ENCODE measurements at regions of chr3 and their contacts with region 1.

Region 1: DNA sequence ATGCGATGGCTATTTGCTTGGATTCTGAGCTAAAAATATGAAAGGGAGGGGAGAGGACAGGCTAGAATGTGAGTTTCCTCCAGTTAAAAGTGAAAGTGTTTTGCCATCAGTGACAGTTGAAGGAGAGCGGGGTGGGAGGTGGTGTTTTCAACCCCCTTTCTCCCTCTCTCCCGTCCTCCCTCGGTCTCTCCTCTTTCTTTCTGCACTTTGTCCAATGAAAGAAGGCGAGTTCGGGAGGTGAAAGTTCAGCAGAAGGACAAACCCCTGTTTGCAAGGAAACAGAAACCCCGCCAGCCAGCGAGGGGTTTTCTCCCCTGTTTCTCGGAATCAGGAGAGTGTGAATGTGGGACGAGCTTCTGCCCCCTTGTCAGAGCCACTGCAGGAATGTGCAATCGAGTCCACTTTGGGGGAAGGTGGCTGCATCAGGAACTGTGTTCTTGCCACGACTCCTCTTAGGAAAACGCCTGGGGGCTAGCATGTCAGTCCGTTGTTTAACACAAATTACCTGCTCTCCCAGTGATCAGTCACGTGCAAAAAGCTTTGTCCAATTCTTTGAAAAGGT is 1.0 kb upstream of the FOXP1 start:
- DNase-seq: peak in 33 of 35 experiments; percentile 4 to 66 (median 26)
- ATAC-seq: peak in 2 of 4 experiments; percentile 20 to 25
- H3K4me3 ChIP-seq: peak overlapping the region; percentile 77 to 81
- H3K4me3 Mint-ChIP-seq: peak overlapping the region; percentile 93 to 96 (median 93)
- H3K27ac ChIP-seq: peak overlapping the region; percentile 70
- H3K27ac Mint-ChIP-seq: peak overlapping the region; percentile 94 to 95
- H3K4me1 ChIP-seq: peaks cover 5 to 26% of the 10 kb centered on the region in 2 experiments
- H3K4me1 Mint-ChIP-seq: peaks cover 37 to 43% (median 39%) of the 10 kb centered on the region in 3 donors
- H3K27me3 ChIP-seq: peaks cover 0 to 6% of the 10 kb centered on the region in 2 experiments
- H3K27me3 Mint-ChIP-seq: no peaks in the 10 kb centered on the region

Region 2: DNA sequence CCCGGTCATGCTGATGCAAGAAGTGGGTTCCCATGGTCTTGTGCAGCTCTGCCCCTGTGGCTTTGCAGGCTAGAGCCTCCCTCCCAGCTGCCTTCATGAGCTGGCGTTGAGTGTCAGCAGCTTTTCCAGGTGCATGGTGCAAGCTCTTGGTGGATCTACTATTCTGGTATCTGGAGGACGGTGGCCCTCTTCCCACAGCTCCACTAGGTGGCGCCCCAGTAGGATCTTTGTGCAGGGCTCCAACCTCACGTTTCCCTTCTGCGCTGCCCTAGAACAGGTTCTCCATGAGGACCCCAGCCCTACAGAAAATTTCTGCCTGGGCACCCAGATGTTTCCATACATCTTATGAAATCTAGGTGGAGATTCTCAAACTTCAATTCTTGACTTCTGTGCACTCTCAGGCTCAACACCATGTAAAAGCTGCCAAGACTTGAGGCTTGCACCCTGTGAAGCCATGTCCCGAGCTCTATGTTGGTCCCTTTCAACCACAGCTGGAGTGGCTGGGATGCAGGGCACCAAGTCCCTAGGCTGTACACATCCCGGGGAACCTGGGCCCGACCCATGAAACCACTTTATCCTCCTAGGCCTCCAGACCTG is 1033.7 kb before region 1 on chr3:
- CTCF ChIA-PET with region 1: interaction called, 5 to 14 read pairs
- POLR2A ChIA-PET with region 1: no interaction called
- DNase-seq: peak; percentile 19 to 80 (median 64)
- ATAC-seq: peak; percentile 74 to 90 (median 78)
- H3K4me3 ChIP-seq: no peak overlapping the region
- H3K4me3 Mint-ChIP-seq: no peak overlapping the region
- H3K27ac ChIP-seq: no peak overlapping the region
- H3K27ac Mint-ChIP-seq: no peak overlapping the region
- H3K4me1 ChIP-seq: no peaks in the 10 kb centered on the region
- H3K4me1 Mint-ChIP-seq: no peaks in the 10 kb centered on the region
- H3K27me3 ChIP-seq: peaks cover 0 to 2% of the 10 kb centered on the region in 2 experiments
- H3K27me3 Mint-ChIP-seq: peaks cover 0 to 4% of the 10 kb centered on the region in 2 donors

Region 3: DNA sequence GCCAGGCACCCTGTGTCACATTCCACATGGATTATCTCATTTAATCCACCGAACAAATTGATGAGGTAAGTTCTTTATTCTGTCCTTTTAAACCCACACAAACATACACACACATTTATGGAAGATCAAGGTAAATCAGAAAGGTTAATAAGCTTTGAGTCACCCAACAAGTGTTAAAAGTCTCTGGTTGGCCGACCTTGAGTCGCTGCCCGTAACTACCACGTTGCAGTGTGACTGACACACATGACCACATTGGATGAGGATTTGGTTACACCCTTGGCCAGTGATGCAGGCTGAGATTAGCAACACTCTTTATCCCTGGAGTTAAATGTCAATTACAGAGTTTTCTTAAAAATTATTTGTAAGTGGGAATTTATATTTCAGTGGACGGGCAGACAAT is 20.2 kb before region 1 on chr3:
- CTCF ChIA-PET with region 1: no interaction called
- POLR2A ChIA-PET with region 1: interaction called in 1 of 2 experiments, 11 read pairs
- DNase-seq: no peak
- ATAC-seq: no peak
- H3K4me3 ChIP-seq: no peak overlapping the region
- H3K4me3 Mint-ChIP-seq: no peak overlapping the region
- H3K27ac ChIP-seq: no peak overlapping the region
- H3K27ac Mint-ChIP-seq: no peak overlapping the region
- H3K4me1 ChIP-seq: no peaks in the 10 kb centered on the region
- H3K4me1 Mint-ChIP-seq: peaks cover 3 to 18% (median 7%) of the 10 kb centered on the region in 3 donors
- H3K27me3 ChIP-seq: no peaks in the 10 kb centered on the region
- H3K27me3 Mint-ChIP-seq: no peaks in the 10 kb centered on the region

Region 4: DNA sequence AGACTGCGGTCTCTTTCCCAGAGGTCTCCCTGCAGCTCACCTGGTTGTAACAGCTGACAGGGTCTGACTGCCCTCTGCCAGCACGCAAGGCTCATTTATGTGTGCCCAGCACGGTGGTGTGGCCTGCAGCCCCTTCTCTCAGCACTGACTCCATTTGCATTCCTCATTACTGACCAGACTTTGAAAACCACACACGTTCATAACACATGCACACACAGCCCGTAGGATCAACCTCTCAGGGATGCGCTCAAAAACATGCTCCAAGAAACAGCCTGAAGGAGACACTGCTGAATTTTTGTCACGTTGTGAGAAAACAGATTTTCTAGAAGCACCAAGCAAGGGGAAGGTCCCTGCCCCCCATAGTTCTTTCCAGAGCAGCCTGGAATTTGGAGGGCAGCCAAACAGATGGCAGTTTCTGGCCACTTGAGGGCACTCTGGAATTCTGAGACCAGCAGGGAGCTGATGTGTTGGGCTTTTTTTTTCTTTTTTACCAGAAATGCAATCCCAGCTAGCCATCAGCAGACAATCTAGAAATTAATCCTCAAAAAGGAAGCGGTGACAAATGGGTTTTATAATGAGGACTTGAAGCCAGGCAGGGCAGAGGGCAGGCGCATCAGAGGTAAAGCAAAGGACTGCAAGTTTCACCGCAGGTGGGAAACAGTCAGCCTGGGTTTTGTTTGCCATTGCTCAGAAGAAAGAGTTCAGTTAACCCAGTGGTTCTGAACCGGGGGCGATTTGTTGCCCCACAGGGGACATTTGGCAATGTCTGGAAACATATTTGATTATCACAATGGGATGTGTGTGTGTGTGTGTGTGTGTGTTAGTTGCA is 370.9 kb after region 1 on chr3:
- CTCF ChIA-PET with region 1: no interaction called
- POLR2A ChIA-PET with region 1: no interaction called
- DNase-seq: peak in 2 of 35 experiments; percentile 16 to 21
- ATAC-seq: no peak
- H3K4me3 ChIP-seq: no peak overlapping the region
- H3K4me3 Mint-ChIP-seq: no peak overlapping the region
- H3K27ac ChIP-seq: no peak overlapping the region
- H3K27ac Mint-ChIP-seq: no peak overlapping the region
- H3K4me1 ChIP-seq: peaks cover 0 to 3% of the 10 kb centered on the region in 2 experiments
- H3K4me1 Mint-ChIP-seq: peaks cover 5 to 8% (median 7%) of the 10 kb centered on the region in 3 donors
- H3K27me3 ChIP-seq: no peaks in the 10 kb centered on the region
- H3K27me3 Mint-ChIP-seq: no peaks in the 10 kb centered on the region

Region 5: DNA sequence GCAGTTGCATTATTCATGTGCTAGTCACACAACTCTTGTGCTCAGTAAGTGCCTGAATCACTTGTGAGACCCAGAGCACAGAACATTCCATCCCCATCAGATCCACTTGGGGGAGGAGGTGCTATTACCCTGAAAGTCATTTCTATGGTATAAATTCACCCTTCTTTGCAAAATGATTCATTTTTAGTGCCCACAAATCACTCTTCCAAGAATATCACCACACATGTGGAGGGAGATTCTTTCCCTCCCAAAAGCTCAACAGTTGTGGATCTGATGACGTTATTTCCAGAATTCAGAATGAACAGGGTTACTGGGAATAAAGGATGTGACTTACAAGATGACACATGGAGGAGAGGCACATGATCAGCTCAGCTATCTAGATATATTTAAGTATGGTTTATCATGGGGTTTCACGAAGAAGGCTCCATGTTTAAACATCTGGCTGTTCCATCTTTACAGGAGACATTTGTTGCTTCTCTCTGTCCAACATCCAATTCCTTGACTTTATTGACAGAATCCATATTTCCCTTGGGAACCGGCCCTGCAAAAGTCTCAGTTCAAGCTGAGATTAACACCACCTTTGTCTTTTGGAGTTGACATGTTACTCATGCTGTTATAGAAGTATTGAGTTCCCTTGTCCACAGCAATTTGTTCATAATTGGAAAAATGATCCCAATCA is 414.6 kb after region 1 on chr3:
- CTCF ChIA-PET with region 1: no interaction called
- POLR2A ChIA-PET with region 1: no interaction called
- DNase-seq: no peak
- ATAC-seq: no peak
- H3K4me3 ChIP-seq: no peak overlapping the region
- H3K4me3 Mint-ChIP-seq: no peak overlapping the region
- H3K27ac ChIP-seq: no peak overlapping the region
- H3K27ac Mint-ChIP-seq: no peak overlapping the region
- H3K4me1 ChIP-seq: no peaks in the 10 kb centered on the region
- H3K4me1 Mint-ChIP-seq: no peaks in the 10 kb centered on the region
- H3K27me3 ChIP-seq: peaks cover 0 to 5% of the 10 kb centered on the region in 2 experiments
- H3K27me3 Mint-ChIP-seq: peaks cover 3 to 9% of the 10 kb centered on the region in 2 donors

Region 6: DNA sequence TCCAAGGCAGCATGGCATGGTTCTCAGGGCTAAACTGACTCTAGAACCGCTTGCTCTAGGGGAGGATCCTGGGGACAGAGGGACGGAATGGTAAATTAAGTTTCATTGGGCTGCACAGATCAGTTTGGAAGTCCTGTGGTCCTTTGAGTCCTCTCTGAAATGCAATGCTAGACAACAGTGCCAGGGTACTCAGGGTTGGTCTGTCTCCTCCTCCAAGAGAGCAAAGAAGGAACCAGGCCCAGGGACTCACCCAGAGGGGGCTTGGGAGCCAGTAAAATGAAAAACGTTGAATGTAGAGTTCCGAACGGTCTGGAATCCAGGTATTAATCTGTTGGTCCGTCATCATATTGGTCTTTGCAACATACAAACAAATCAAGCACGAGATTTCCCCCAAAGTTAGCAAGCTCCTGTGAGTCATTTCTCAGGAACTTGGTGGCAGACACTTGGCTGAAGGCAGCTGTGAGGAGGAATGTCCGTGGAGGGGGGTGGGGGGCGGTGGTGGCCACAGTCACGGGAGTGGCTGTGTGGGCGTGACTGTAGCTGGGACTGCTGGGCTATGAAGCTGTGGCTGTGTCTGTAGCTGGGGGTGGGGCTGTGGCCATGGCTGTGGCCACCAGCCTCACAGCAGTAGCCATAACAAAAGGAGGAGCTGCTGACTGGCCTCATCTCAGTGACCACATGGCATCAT is 902.7 kb after region 1 on chr3:
- CTCF ChIA-PET with region 1: no interaction called
- POLR2A ChIA-PET with region 1: no interaction called
- DNase-seq: no peak
- ATAC-seq: no peak
- H3K4me3 ChIP-seq: no peak overlapping the region
- H3K4me3 Mint-ChIP-seq: no peak overlapping the region
- H3K27ac ChIP-seq: no peak overlapping the region
- H3K27ac Mint-ChIP-seq: no peak overlapping the region
- H3K4me1 ChIP-seq: peaks cover 0 to 6% of the 10 kb centered on the region in 2 experiments
- H3K4me1 Mint-ChIP-seq: peaks cover 11 to 13% (median 11%) of the 10 kb centered on the region in 3 donors
- H3K27me3 ChIP-seq: peaks cover 0 to 3% of the 10 kb centered on the region in 2 experiments
- H3K27me3 Mint-ChIP-seq: no peaks in the 10 kb centered on the region